ENCODE measurements at regions of chrX and their contacts with region 1.

Region 1: GRCh38 chrX:119495734-119496726 is 27.8 kb downstream of the SLC25A5 start:
- DNase-seq: no peak
- H3K4me3 Mint-ChIP-seq: no peak overlapping the region
- H3K27ac Mint-ChIP-seq: no peak overlapping the region
- H3K4me1 Mint-ChIP-seq: peaks cover 14% of the 10 kb centered on the region
- H3K27me3 Mint-ChIP-seq: no peaks in the 10 kb centered on the region

Region 2: GRCh38 chrX:119482481-119483480 is 13.2 kb before region 1 on chrX:
- CTCF ChIA-PET with region 1: interaction called, 12 read pairs
- POLR2A ChIA-PET with region 1: no interaction called
- DNase-seq: peak; percentile 72
- H3K4me3 Mint-ChIP-seq: peak overlapping the region; percentile 64
- H3K27ac Mint-ChIP-seq: peak overlapping the region; percentile 59
- H3K4me1 Mint-ChIP-seq: peaks cover 9% of the 10 kb centered on the region
- H3K27me3 Mint-ChIP-seq: peaks cover 4% of the 10 kb centered on the region

Region 3: GRCh38 chrX:119529345-119530276 is 33.6 kb after region 1 on chrX:
- CTCF ChIA-PET with region 1: no interaction called
- POLR2A ChIA-PET with region 1: no interaction called
- DNase-seq: no peak
- H3K4me3 Mint-ChIP-seq: no peak overlapping the region
- H3K27ac Mint-ChIP-seq: no peak overlapping the region
- H3K4me1 Mint-ChIP-seq: peaks cover 1% of the 10 kb centered on the region
- H3K27me3 Mint-ChIP-seq: no peaks in the 10 kb centered on the region